Dendritic cell treated with granulocyte-macrophage colony-stimulating factor and Interleukin-4, amounts not matched to agents 40 ng/mL and 50 ng/mL, for 4 days (primary cell): ENCODE measurements at regions of chrX and their contacts with region 1.

Region 1: GRCh38 chrX:43644124-43644701 is 11.9 kb upstream of the MAOA start:
- H3K4me3 Mint-ChIP-seq: no peak overlapping the region
- H3K27ac Mint-ChIP-seq: peak overlapping the region; percentile 89
- H3K4me1 Mint-ChIP-seq: peaks cover 27% of the 10 kb centered on the region
- H3K27me3 Mint-ChIP-seq: no peaks in the 10 kb centered on the region

Region 2: GRCh38 chrX:43604753-43605152 is 39.5 kb before region 1 on chrX:
- intact Hi-C with region 1: loop called (anchors 5 kb)
- H3K4me3 Mint-ChIP-seq: no peak overlapping the region
- H3K27ac Mint-ChIP-seq: peak overlapping the region; percentile 82
- H3K4me1 Mint-ChIP-seq: peaks cover 12% of the 10 kb centered on the region
- H3K27me3 Mint-ChIP-seq: no peaks in the 10 kb centered on the region